ENCODE measurements at regions of chr3 and their contacts with region 1.

Region 1: GRCh38 chr3:111691293-111691909 is 96.3 kb upstream of the ZBED2 start:
- DNase-seq: peak; percentile 73
- ATAC-seq: peak; percentile 52
- H3K4me3 ChIP-seq: no peak overlapping the region
- H3K27ac ChIP-seq: no peak overlapping the region
- H3K4me1 ChIP-seq: peaks cover 41% of the 10 kb centered on the region
- H3K27me3 ChIP-seq: no peaks in the 10 kb centered on the region
- CTCF ChIP-seq: peak; percentile 88

Region 2: DNA sequence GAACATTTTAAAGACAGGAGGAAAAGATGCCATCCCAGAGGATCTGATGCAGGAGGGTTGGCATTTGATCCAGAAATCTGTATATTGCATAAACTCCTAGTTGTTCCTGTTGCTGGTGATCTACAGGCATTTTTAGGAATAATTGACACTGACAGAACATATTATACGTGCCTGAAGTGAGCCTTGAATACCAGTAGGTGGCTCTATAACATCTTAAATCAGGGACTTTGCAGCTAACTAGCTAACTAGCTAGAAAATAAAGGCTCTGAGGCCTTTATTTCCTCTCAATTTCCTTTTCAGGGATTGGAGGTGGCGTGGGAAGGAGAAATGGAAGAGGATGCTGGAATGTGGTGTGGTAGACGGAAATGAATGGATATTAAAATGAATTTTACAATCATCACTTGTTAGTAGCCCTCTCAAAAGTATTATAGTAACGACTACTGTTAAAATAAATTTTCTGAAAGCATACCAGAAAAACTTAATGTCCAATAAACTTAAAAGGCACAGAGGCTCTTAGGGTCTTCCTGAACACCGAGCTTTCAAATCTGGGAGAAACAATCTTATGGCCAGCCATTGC is 22.4 kb before region 1 on chr3:
- CTCF ChIA-PET with region 1: interaction called, 35 read pairs
- POLR2A ChIA-PET with region 1: interaction called, 5 read pairs
- intact Hi-C with region 1: loop called (anchors 1 kb)
- DNase-seq: peak; percentile 81
- ATAC-seq: peak; percentile 82
- H3K4me3 ChIP-seq: no peak overlapping the region
- H3K27ac ChIP-seq: no peak overlapping the region
- H3K4me1 ChIP-seq: peaks cover 50% of the 10 kb centered on the region
- H3K27me3 ChIP-seq: no peaks in the 10 kb centered on the region
- CTCF ChIP-seq: peak; percentile 95

Region 3: GRCh38 chr3:111676211-111677006 is 15.0 kb before region 1 on chr3:
- CTCF ChIA-PET with region 1: interaction called, 6 read pairs
- POLR2A ChIA-PET with region 1: interaction called, 3 read pairs
- intact Hi-C with region 1: loop called (anchors 1 kb)
- DNase-seq: peak; percentile 99
- ATAC-seq: peak; percentile 76
- H3K4me3 ChIP-seq: peak overlapping the region; percentile 87
- H3K27ac ChIP-seq: peak overlapping the region; percentile 86
- H3K4me1 ChIP-seq: peaks cover 53% of the 10 kb centered on the region
- H3K27me3 ChIP-seq: no peaks in the 10 kb centered on the region
- CTCF ChIP-seq: no peak

Measured in PC-3 (cell line).